ENCODE measurements at regions of chr2 and their contacts with region 1.

Region 1: DNA sequence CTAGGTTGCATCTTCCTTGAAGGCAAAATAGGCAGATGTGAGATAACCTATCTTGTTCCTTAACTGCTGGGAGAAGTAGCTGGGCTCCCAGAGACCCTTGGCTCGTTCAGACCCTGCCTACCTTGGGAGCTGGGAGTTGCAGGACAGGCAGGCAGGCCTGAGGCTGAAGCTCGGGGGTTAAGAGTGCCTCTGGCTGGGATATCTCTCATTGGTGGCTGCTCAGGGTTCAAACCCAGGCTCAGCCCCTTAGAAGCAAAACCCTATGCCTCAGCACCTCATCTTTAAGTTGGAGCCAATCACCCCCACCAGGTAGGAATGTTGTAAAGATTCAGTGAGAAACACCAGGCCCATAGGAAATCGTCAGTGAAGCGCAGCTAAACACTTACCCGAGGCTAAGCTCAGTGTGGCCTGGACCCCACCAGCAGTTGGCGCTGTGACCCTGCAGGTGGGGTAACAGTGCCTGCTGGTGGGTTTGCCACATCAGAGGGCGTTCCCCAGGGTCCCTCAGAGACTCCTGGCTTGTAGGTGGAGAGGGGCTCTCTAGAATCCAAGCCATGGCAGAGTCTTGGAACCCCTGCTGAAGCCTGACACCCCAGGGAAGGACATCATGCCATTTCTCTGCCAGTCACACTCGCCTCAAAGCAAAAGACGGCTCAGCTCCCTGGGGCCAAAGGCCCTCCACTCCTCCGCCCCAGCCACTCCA is 54.6 kb upstream of the GPR17 start:
- DNase-seq: peak; percentile 72 to 76
- H3K4me3 ChIP-seq: no peak overlapping the region
- H3K4me3 Mint-ChIP-seq: no peak overlapping the region
- H3K27ac Mint-ChIP-seq: no peak overlapping the region
- H3K4me1 ChIP-seq: no peaks in the 10 kb centered on the region
- H3K4me1 Mint-ChIP-seq: no peaks in the 10 kb centered on the region
- H3K27me3 ChIP-seq: no peaks in the 10 kb centered on the region
- H3K27me3 Mint-ChIP-seq: peaks cover 7% of the 10 kb centered on the region
- CTCF ChIP-seq: peak; percentile 86 to 99

Region 2: GRCh38 chr2:126981268-126981875 is 610.0 kb before region 1 on chr2:
- CTCF ChIA-PET with region 1: no interaction called
- POLR2A ChIA-PET with region 1: no interaction called
- intact Hi-C with region 1: no loop called
- DNase-seq: no peak
- H3K4me3 ChIP-seq: no peak overlapping the region
- H3K4me3 Mint-ChIP-seq: no peak overlapping the region
- H3K27ac Mint-ChIP-seq: no peak overlapping the region
- H3K4me1 ChIP-seq: no peaks in the 10 kb centered on the region; the same call in 1 of the 2 replicates
- H3K4me1 Mint-ChIP-seq: peaks cover 14% of the 10 kb centered on the region
- H3K27me3 ChIP-seq: no peaks in the 10 kb centered on the region
- H3K27me3 Mint-ChIP-seq: no peaks in the 10 kb centered on the region
- CTCF ChIP-seq: no peak

Region 3: DNA sequence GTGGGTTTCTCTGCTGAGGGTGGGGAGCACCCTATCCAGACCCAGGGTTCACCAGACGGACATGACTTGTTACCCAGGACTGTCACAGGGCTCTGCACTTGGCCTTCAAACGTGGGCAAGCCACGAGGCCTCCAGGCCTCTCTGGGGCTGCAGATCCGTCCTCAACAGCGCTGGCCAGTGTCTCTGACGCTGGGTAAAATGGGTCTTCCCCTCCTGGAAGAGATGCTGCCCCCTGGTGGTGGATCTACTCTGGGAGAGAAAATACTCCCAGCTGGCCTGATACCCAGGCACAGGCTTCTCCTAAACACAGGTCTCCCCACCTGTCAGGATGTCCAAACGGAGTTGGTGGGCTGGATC is 58.3 kb after region 1 on chr2:
- CTCF ChIA-PET with region 1: interaction called, 43 read pairs
- POLR2A ChIA-PET with region 1: no interaction called
- intact Hi-C with region 1: loop called (anchors 1 kb)
- DNase-seq: peak; percentile 87 to 90
- H3K4me3 ChIP-seq: no peak overlapping the region
- H3K4me3 Mint-ChIP-seq: no peak overlapping the region
- H3K27ac Mint-ChIP-seq: no peak overlapping the region
- H3K4me1 ChIP-seq: peaks cover 11% of the 10 kb centered on the region
- H3K4me1 Mint-ChIP-seq: no peaks in the 10 kb centered on the region
- H3K27me3 ChIP-seq: no peaks in the 10 kb centered on the region
- H3K27me3 Mint-ChIP-seq: no peaks in the 10 kb centered on the region
- CTCF ChIP-seq: peak; percentile 82 to 86

Region 4: GRCh38 chr2:128318776-128319464 is 727.5 kb after region 1 on chr2 and contains the start of gene HS6ST1:
- CTCF ChIA-PET with region 1: no interaction called
- POLR2A ChIA-PET with region 1: no interaction called
- intact Hi-C with region 1: no loop called
- DNase-seq: peak; percentile 83 to 96
- H3K4me3 ChIP-seq: peak within 1 kb of the TSS; percentile 74
- H3K4me3 Mint-ChIP-seq: peak within 1 kb of the TSS; percentile 87
- H3K27ac Mint-ChIP-seq: peak within 1 kb of the TSS; percentile 62
- H3K4me1 ChIP-seq: peaks cover 20% of the 10 kb centered on the region
- H3K4me1 Mint-ChIP-seq: peaks cover 4% of the 10 kb centered on the region
- H3K27me3 ChIP-seq: no peaks in the 10 kb centered on the region
- H3K27me3 Mint-ChIP-seq: no peaks in the 10 kb centered on the region
- CTCF ChIP-seq: no peak
- total RNA-seq, gene HS6ST1: 17.5 and 20.3 TPM in 2 replicates

Measured in Caco-2 (cell line).